ENCODE measurements at regions of chr2 and their contacts with region 1.

Region 1: DNA sequence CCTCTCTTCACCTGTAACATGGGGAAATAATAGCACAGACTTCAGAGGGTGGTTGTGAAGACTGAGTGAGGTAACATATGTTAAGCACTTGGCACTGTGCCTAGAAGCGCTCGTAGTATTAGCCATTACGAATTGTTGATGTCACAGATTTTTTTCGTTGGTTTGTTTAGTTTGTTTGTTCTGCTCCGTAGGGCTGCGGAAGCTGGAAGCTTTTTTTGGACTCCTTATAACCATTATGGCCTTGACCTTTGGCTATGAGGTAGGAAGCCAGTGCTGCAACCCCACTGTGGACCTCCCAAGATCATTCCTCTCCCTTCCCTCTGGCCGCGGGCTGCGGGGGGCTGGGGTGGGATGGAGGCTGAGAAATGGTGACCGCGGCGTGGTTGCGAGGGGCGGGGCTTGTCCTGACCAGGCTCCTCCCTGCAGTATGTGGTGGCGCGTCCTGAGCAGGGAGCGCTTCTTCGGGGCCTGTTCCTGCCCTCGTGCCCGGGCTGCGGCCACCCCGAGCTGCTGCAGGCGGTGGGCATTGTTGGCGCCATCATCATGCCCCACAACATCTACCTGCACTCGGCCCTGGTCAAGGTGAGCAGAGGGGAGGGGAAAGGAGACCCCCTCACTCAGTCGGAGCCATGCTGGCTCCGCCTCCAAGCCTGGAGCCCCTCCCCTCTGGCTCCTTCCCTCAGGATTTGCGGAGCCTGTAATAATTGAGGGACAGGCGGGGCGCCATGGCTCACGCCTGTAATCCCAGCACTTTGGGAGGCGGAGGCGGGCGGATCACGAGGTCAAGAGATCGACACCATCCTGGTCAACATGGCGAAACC is 5.5 kb downstream of the SLC11A1 start:
- DNase-seq: peak; percentile 86
- ATAC-seq: no peak
- H3K4me3 ChIP-seq: peak overlapping the region; percentile 9 to 57 (median 11); a peak in 3 of 6 replicates
- H3K27ac ChIP-seq: no peak overlapping the region
- H3K4me1 ChIP-seq: peaks cover 77% of the 10 kb centered on the region
- H3K27me3 ChIP-seq: peaks cover 6 to 20% of the 10 kb centered on the region in 2 experiments; a peak in 4 of 5 replicates
- CTCF ChIP-seq: no peak
- EP300 ChIP-seq: peak in 1 of 2 experiments; percentile 70; a peak in 2 of 4 replicates
- POLR2A ChIP-seq: no peak
- RAD21 ChIP-seq: no peak

Region 2: DNA sequence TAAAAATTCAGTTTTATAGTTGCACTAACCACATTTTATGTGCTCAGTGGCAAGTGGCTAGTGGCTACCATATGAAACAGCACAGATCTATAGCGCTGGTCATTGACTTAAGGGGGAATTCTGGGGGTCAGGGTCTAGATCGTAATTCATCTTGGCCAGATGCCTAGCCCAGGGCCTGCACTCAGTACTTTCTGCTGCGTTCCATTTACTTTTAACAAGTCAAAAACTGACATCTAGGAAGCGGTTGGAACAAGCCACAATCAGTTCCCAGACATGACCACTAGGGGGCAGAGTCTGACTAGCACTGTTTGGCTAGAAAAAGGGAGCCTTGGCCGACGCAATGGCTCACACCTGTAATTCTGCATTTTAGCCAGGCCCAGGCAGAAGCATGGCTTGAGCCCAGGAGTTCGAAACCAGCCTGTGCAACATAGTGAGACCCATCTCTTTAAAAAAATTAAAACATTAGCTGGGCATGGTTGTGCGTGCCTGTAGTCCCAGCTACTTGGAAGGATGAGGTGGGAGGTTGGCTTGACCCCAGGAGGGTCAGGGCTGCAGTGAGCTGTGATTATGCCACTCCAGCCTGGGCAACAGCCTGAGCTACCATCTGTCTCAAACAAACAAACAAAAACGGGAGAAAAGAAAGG is 86.3 kb before region 1 on chr2:
- CTCF ChIA-PET with region 1: interaction called, 4 read pairs
- POLR2A ChIA-PET with region 1: interaction called, 4 read pairs
- in situ Hi-C with region 1: no loop called
- intact Hi-C with region 1: loop called (anchors 2 kb)
- DNase-seq: peak; percentile 90
- ATAC-seq: peak; percentile 64
- H3K4me3 ChIP-seq: no peak overlapping the region
- H3K27ac ChIP-seq: peak overlapping the region; percentile 25
- H3K4me1 ChIP-seq: peaks cover 63% of the 10 kb centered on the region
- H3K27me3 ChIP-seq: no peaks in the 10 kb centered on the region
- CTCF ChIP-seq: peak; percentile 99
- EP300 ChIP-seq: no peak
- POLR2A ChIP-seq: no peak
- RAD21 ChIP-seq: peak; percentile 99

Region 3: DNA sequence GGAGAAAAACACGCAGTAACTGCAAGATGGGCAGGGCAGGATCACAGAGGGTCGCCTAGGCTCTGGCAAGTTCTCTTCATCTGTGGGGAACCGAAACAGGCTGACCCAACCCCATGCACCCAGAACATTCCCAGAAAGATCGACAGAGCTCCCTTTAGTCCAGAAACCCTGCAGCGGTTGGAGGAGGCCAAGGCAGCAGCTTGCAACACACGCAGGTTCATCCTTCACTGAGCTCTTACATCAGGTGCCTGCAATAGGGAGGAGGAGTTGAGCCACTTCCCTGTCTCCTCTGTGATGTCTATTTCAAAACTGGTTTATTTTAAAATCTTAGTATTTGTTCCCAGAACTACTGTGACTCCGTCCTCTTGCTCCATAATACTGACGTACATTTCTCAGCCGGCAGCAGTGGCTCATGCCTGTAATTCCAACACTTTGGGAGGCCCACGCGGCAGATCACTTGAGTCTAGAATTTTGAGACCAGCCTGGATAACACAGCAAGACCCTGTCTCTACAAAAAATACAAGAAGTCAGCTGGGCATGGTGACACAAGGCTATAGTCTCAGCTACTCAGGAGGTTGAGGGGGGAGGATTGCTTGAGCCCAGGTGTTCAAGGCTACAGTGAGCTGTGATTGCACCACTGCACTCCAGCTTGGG is 17.0 kb before region 1 on chr2:
- CTCF ChIA-PET with region 1: no interaction called
- POLR2A ChIA-PET with region 1: interaction called, 10 read pairs
- in situ Hi-C with region 1: no loop called
- intact Hi-C with region 1: loop called (anchors 1 kb)
- DNase-seq: peak; percentile 57
- ATAC-seq: peak; percentile 69
- H3K4me3 ChIP-seq: peak overlapping the region in 1 of 3 experiments; percentile 0; a peak in 1 of 6 replicates
- H3K27ac ChIP-seq: no peak overlapping the region
- H3K4me1 ChIP-seq: peaks cover 49% of the 10 kb centered on the region
- H3K27me3 ChIP-seq: peaks cover 2% of the 10 kb centered on the region in 2 experiments; a peak in 2 of 5 replicates
- CTCF ChIP-seq: no peak
- EP300 ChIP-seq: no peak
- POLR2A ChIP-seq: no peak
- RAD21 ChIP-seq: no peak

Region 4: DNA sequence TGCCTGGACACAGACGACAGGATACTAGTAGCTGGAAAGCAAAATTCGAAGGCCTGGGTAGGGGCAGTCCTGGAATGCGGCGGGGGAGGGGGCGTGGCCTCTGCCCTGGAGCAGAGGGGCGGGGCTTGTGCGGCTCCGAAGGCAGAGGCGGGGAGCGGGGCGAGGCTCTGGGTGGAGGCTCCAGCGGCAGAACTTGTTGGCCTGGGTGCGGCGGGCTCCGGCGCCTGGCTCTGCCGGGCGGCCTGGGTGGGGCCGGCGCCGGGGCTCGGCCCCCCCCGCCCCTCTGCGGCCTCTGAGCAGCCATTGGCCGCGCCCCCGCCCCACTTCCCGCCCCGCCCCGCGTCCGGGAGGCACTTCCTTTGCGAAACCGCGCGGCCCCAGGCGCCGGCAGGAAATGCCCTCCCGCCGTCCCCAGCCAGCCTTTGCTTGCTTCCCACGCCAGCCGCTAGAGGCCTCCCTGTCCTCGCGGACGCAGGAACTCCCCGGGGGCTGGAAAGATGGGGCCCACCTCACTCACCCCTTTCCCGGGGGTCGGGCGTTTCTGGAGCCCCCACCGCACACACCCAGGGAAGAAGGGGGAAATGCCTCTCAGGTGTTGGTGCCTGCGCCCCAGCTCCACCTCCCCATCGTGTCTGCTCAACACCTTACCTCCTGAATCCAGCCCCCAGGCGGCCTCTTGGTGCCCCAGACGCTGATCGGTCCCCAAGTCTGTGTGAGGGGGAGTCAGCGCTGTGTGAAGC is 18.8 kb after region 1 on chr2:
- CTCF ChIA-PET with region 1: no interaction called
- POLR2A ChIA-PET with region 1: interaction called, 10 read pairs
- in situ Hi-C with region 1: no loop called
- intact Hi-C with region 1: no loop called
- DNase-seq: peak; percentile 92
- ATAC-seq: peak; percentile 78
- H3K4me3 ChIP-seq: peak overlapping the region; percentile 67 to 86 (median 67)
- H3K27ac ChIP-seq: peak overlapping the region; percentile 79
- H3K4me1 ChIP-seq: peaks cover 61% of the 10 kb centered on the region
- H3K27me3 ChIP-seq: no peaks in the 10 kb centered on the region
- CTCF ChIP-seq: peak; percentile 98
- EP300 ChIP-seq: peak; percentile 37 to 53; a peak in 2 of 4 replicates
- POLR2A ChIP-seq: peak in 1 of 2 experiments; percentile 23; a peak in 1 of 4 replicates
- RAD21 ChIP-seq: peak; percentile 98

Measured in HepG2 (cell line).